Calu3 (cell line): ENCODE measurements at regions of chr1 and their contacts with region 1.

Region 1: DNA sequence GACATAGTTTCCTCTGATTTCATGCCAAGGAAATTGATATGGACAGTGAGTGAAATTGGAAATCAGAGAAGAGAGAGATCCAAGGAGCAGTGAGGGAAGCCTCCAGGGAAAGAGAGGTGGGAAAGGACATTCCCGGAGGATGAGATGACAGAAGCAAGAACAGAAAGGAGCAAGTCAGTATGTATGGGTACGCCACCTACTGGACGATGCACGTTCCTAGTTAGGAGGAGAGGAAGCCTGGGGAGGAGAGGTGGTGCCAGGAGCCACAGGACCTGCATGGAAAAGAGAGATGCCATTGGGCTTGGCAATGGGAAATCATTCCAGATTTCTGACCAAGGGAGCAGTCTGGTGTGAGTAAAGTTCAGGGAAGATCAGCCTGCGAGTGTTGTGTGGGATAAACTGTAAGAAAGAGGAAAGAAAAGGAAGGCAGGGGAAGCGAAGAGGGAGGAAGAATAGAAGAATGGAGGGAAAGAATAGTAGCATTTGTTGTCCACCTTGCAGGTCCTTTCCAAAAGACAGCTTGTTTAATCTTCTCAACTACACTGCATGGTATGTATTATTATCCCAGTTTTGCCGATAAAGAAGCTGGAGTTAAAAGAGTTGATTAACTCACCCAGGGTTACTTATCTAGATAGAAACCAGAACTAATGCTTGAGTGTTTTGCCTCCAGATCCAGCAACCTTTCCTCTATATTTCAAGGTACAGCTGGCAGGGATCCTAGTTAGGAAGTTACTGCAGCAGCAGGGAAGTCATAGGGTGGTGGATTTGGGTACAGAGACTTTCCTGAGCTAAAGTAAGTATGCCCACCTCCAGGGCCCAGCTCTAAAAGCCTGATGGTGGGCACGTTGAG is 27.4 kb downstream of the C1orf116 start:
- DNase-seq: peak; percentile 85
- H3K4me3 Mint-ChIP-seq: peak overlapping the region; percentile 26
- H3K27ac Mint-ChIP-seq: peak overlapping the region; percentile 88
- H3K4me1 Mint-ChIP-seq: peaks cover 97% of the 10 kb centered on the region
- H3K27me3 Mint-ChIP-seq: no peaks in the 10 kb centered on the region
- CTCF ChIP-seq: peak; percentile 89

Region 2: DNA sequence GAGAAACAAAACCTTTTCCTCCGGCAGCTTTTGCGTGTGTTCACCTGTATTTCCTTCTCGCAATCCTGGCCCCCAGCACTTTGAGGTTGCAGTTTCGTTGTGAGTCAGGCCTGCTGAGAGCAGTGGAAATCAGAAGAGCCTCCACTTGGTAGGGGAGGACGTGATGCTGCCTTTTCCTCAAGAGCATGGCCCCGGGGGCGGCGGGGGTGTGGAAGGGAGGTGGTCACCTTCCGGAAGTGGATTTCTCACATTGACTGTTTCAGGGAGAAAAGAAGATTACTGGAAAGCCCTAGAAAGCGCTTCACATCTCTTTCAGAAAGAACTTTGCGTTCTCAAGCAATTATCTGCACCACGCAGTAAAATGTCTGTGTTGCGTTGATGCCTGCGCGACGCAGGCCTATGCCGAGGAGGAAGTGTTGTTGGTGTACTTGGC is 220.7 kb before region 1 on chr1:
- CTCF ChIA-PET with region 1: no interaction called
- intact Hi-C with region 1: no loop called
- DNase-seq: no peak
- H3K4me3 Mint-ChIP-seq: no peak overlapping the region
- H3K27ac Mint-ChIP-seq: no peak overlapping the region
- H3K4me1 Mint-ChIP-seq: no peaks in the 10 kb centered on the region
- H3K27me3 Mint-ChIP-seq: peaks cover 59% of the 10 kb centered on the region
- CTCF ChIP-seq: no peak

Region 3: GRCh38 chr1:206952171-206952570 is 53.0 kb before region 1 on chr1:
- CTCF ChIA-PET with region 1: no interaction called
- intact Hi-C with region 1: loop called (anchors 5 kb)
- DNase-seq: peak; percentile 74
- H3K4me3 Mint-ChIP-seq: peak overlapping the region; percentile 20
- H3K27ac Mint-ChIP-seq: peak overlapping the region; percentile 70
- H3K4me1 Mint-ChIP-seq: peaks cover 93% of the 10 kb centered on the region
- H3K27me3 Mint-ChIP-seq: no peaks in the 10 kb centered on the region
- CTCF ChIP-seq: no peak

Region 4: GRCh38 chr1:207017615-207018559 is 12.7 kb after region 1 on chr1:
- CTCF ChIA-PET with region 1: interaction called, 25 read pairs
- intact Hi-C with region 1: loop called (anchors 2 kb)
- DNase-seq: no peak
- H3K4me3 Mint-ChIP-seq: no peak overlapping the region
- H3K27ac Mint-ChIP-seq: peak overlapping the region; percentile 98
- H3K4me1 Mint-ChIP-seq: peaks cover 89% of the 10 kb centered on the region
- H3K27me3 Mint-ChIP-seq: no peaks in the 10 kb centered on the region
- CTCF ChIP-seq: no peak

Region 5: DNA sequence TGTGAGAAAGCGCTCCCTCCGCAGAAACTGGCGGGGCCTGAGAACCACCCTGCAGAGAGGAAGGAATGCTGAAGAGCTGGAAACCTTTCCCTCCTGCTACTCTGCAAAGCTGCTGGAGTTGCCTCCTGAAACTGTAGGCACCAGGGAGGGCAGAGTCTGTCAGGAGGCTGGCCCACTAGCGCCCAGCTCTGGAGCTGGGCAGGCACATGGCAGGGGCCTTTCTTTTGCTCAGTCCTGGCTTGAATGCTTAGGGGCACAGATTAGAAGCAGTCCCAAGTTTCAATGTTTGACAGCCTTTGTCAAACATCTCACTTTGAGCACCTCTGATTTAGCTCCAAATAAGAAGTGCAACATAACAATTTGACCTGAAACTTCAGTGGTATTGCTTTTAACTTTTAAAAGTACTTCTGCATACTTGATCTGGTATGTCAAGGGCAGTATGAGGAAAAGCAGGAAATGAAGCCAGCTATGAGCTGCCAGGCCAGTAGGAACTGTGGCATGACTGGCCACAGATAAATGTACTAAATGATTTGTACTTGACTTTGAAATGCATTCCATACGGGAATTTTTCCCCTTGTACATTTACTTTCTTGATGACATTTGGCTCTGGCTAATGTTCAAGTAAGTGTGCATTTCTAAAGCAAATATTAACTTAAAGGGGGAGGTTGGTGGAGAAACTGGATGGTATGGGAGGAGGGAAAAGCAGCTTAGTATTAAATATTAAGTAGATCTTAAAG is 20.1 kb after region 1 on chr1:
- CTCF ChIA-PET with region 1: interaction called, 41 read pairs
- intact Hi-C with region 1: loop called (anchors 2 kb)
- DNase-seq: no peak
- H3K4me3 Mint-ChIP-seq: peak overlapping the region; percentile 92
- H3K27ac Mint-ChIP-seq: peak overlapping the region; percentile 98
- H3K4me1 Mint-ChIP-seq: peaks cover 96% of the 10 kb centered on the region
- H3K27me3 Mint-ChIP-seq: no peaks in the 10 kb centered on the region
- CTCF ChIP-seq: no peak

Region 6: GRCh38 chr1:207032528-207033017 is 27.4 kb after region 1 on chr1 and contains the start of gene C1orf116:
- CTCF ChIA-PET with region 1: interaction called, 41 read pairs
- intact Hi-C with region 1: no loop called
- DNase-seq: peak; percentile 92
- H3K4me3 Mint-ChIP-seq: peak within 1 kb of the TSS; percentile 92
- H3K27ac Mint-ChIP-seq: peak within 1 kb of the TSS; percentile 98
- H3K4me1 Mint-ChIP-seq: peaks cover 27% of the 10 kb centered on the region
- H3K27me3 Mint-ChIP-seq: no peaks in the 10 kb centered on the region
- CTCF ChIP-seq: no peak
- total RNA-seq, gene C1orf116: 106 and 124 TPM in 2 replicates

Region 7: GRCh38 chr1:207052911-207053769 is 47.9 kb after region 1 on chr1 and contains the start of gene PFKFB2:
- CTCF ChIA-PET with region 1: interaction called, 4 read pairs
- intact Hi-C with region 1: loop called (anchors 10 kb)
- DNase-seq: peak; percentile 100
- H3K4me3 Mint-ChIP-seq: peak within 1 kb of the TSS; percentile 97
- H3K27ac Mint-ChIP-seq: peak within 1 kb of the TSS; percentile 93
- H3K4me1 Mint-ChIP-seq: peaks cover 58% of the 10 kb centered on the region
- H3K27me3 Mint-ChIP-seq: no peaks in the 10 kb centered on the region
- CTCF ChIP-seq: peak; percentile 45
- total RNA-seq, gene PFKFB2: 52.0 and 54.4 TPM in 2 replicates